Caco-2 (cell line): ENCODE measurements at regions of chr20 and their contacts with region 1.

Region 1: GRCh38 chr20:14986026-14986655 is 648.7 kb upstream of the FLRT3 start:
- DNase-seq: peak; percentile 88 to 93
- H3K4me3 ChIP-seq: no peak overlapping the region
- H3K4me3 Mint-ChIP-seq: peak overlapping the region; percentile 47
- H3K27ac Mint-ChIP-seq: peak overlapping the region; percentile 94
- H3K4me1 ChIP-seq: peaks cover 40% of the 10 kb centered on the region
- H3K4me1 Mint-ChIP-seq: peaks cover 25% of the 10 kb centered on the region
- H3K27me3 ChIP-seq: no peaks in the 10 kb centered on the region
- H3K27me3 Mint-ChIP-seq: no peaks in the 10 kb centered on the region
- CTCF ChIP-seq: no peak

Region 2: DNA sequence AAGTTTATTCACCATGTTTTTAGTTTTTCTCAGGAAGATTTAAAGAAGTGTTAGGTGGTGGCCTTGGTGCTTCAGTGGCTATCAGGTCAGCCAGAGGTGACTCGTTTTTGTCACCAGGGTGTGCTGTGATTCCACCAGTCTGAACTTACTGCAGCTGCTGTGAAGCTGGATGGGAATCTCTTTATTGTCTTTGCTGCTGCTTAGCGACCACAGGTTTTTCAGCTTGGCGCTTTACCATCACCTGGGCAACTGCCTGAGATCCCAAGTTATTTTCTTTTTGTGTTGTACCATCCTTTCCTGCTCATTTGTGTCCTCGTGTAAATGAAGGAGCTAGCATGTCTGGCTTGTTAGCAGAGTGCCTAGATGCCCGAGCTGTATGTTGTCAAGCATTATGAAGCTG is 844.0 kb before region 1 on chr20:
- CTCF ChIA-PET with region 1: no interaction called
- POLR2A ChIA-PET with region 1: no interaction called
- intact Hi-C with region 1: loop called (anchors 2 kb)
- DNase-seq: peak; percentile 84 to 87
- H3K4me3 ChIP-seq: no peak overlapping the region
- H3K4me3 Mint-ChIP-seq: peak overlapping the region; percentile 23
- H3K27ac Mint-ChIP-seq: no peak overlapping the region
- H3K4me1 ChIP-seq: peaks cover 28% of the 10 kb centered on the region
- H3K4me1 Mint-ChIP-seq: no peaks in the 10 kb centered on the region
- H3K27me3 ChIP-seq: no peaks in the 10 kb centered on the region
- H3K27me3 Mint-ChIP-seq: no peaks in the 10 kb centered on the region
- CTCF ChIP-seq: peak; percentile 77 to 82

Region 3: DNA sequence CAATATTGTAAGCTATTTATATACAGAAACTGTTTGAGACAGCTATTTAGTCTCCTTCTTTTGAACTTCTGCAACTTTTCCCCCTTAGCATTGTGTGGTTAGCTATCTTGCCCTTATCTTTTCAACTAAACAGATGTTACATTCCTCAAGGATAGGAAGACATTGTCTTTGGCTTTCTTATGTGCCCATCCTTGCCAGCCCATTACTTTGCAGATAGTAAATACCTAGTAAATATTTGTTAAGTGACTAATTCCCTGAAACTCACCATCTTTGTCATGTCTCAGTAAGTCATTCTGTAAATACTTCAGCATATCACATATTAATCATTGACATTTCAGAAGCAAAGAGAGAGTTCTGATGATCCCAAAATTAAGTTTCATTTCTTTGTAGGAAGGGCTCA is 579.6 kb before region 1 on chr20:
- CTCF ChIA-PET with region 1: no interaction called
- POLR2A ChIA-PET with region 1: no interaction called
- intact Hi-C with region 1: loop called (anchors 1 kb)
- DNase-seq: peak; percentile 79
- H3K4me3 ChIP-seq: no peak overlapping the region
- H3K4me3 Mint-ChIP-seq: no peak overlapping the region
- H3K27ac Mint-ChIP-seq: peak overlapping the region; percentile 92
- H3K4me1 ChIP-seq: peaks cover 39% of the 10 kb centered on the region
- H3K4me1 Mint-ChIP-seq: peaks cover 36% of the 10 kb centered on the region
- H3K27me3 ChIP-seq: no peaks in the 10 kb centered on the region
- H3K27me3 Mint-ChIP-seq: no peaks in the 10 kb centered on the region
- CTCF ChIP-seq: no peak

Region 4: DNA sequence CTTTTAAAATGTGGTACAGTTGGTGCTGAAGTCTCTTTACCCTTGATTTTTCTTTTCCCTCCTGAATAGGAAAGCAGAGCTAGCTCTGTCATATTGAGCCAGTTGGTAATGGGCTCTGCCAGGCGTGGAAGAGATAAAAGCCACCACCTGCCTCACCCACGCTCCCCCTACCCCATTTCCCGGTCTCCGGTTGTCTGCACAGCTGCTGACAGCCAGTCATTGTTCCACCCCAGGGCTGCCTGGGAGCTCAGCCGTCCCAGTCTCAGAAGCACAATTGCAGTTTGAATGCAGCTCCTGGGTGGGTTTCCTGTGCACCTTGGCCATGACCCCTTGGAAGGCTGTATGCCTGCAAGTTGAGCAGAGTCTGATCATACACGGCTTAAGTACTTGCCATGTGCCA is 26.4 kb after region 1 on chr20:
- CTCF ChIA-PET with region 1: no interaction called
- POLR2A ChIA-PET with region 1: no interaction called
- intact Hi-C with region 1: loop called (anchors 1 kb)
- DNase-seq: no peak
- H3K4me3 ChIP-seq: no peak overlapping the region
- H3K4me3 Mint-ChIP-seq: no peak overlapping the region
- H3K27ac Mint-ChIP-seq: no peak overlapping the region
- H3K4me1 ChIP-seq: peaks cover 3% of the 10 kb centered on the region; the same call in 1 of the 2 replicates
- H3K4me1 Mint-ChIP-seq: peaks cover 12% of the 10 kb centered on the region
- H3K27me3 ChIP-seq: no peaks in the 10 kb centered on the region
- H3K27me3 Mint-ChIP-seq: no peaks in the 10 kb centered on the region
- CTCF ChIP-seq: no peak

Region 5: GRCh38 chr20:15061955-15062354 is 75.8 kb after region 1 on chr20:
- CTCF ChIA-PET with region 1: no interaction called
- POLR2A ChIA-PET with region 1: no interaction called
- intact Hi-C with region 1: loop called (anchors 5 kb)
- DNase-seq: peak; percentile 56 to 65
- H3K4me3 ChIP-seq: no peak overlapping the region
- H3K4me3 Mint-ChIP-seq: no peak overlapping the region
- H3K27ac Mint-ChIP-seq: no peak overlapping the region
- H3K4me1 ChIP-seq: peaks cover 25% of the 10 kb centered on the region; the same call in 1 of the 2 replicates
- H3K4me1 Mint-ChIP-seq: peaks cover 21% of the 10 kb centered on the region
- H3K27me3 ChIP-seq: no peaks in the 10 kb centered on the region
- H3K27me3 Mint-ChIP-seq: no peaks in the 10 kb centered on the region
- CTCF ChIP-seq: peak in 1 of 2 experiments; percentile 12

Region 6: DNA sequence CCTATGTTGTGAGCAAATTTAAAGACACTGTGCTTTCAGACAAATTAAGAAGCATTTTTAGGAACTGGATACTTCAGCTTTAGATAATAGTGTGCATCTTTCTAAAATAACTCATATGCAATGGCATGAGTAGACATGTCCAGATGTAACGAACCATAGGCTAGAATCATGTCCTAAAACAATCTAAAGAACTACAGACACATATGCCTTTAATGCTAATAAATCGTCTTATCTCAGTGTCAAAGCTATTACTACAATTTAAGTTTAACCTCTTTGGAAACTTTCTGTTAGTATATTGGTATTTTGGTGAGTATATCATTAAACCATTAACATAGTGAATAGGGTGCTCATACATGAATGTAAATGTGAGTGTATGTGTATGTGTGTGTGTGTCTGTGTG is 259.8 kb after region 1 on chr20:
- CTCF ChIA-PET with region 1: no interaction called
- POLR2A ChIA-PET with region 1: no interaction called
- intact Hi-C with region 1: no loop called
- DNase-seq: no peak
- H3K4me3 ChIP-seq: no peak overlapping the region
- H3K4me3 Mint-ChIP-seq: no peak overlapping the region
- H3K27ac Mint-ChIP-seq: no peak overlapping the region
- H3K4me1 ChIP-seq: no peaks in the 10 kb centered on the region
- H3K4me1 Mint-ChIP-seq: peaks cover 7% of the 10 kb centered on the region
- H3K27me3 ChIP-seq: no peaks in the 10 kb centered on the region
- H3K27me3 Mint-ChIP-seq: no peaks in the 10 kb centered on the region
- CTCF ChIP-seq: no peak

Region 7: GRCh38 chr20:15491575-15491974 is 505.4 kb after region 1 on chr20:
- CTCF ChIA-PET with region 1: no interaction called
- POLR2A ChIA-PET with region 1: no interaction called
- intact Hi-C with region 1: loop called (anchors 5 kb)
- DNase-seq: peak in 1 of 2 experiments; percentile 44
- H3K4me3 ChIP-seq: no peak overlapping the region
- H3K4me3 Mint-ChIP-seq: no peak overlapping the region
- H3K27ac Mint-ChIP-seq: peak overlapping the region; percentile 45
- H3K4me1 ChIP-seq: peaks cover 42% of the 10 kb centered on the region
- H3K4me1 Mint-ChIP-seq: peaks cover 42% of the 10 kb centered on the region
- H3K27me3 ChIP-seq: no peaks in the 10 kb centered on the region
- H3K27me3 Mint-ChIP-seq: no peaks in the 10 kb centered on the region
- CTCF ChIP-seq: peak; percentile 33 to 63